Adrenal gland (tissue), 19 donors: ENCODE measurements at regions of chr2 and their contacts with region 1.

Region 1: GRCh38 chr2:230160112-230160660 is 59.6 kb downstream of the SP110 start:
- DNase-seq: peak; percentile 31 to 70 (median 61)
- H3K4me3 ChIP-seq: no peak overlapping the region
- H3K27ac ChIP-seq: no peak overlapping the region
- H3K4me1 ChIP-seq: no peaks in the 10 kb centered on the region
- H3K27me3 ChIP-seq: no peaks in the 10 kb centered on the region
- CTCF ChIP-seq: peak; percentile 66 to 92 (median 86)
- POLR2A ChIP-seq: no peak

Region 2: GRCh38 chr2:230007931-230008707 is 152.1 kb before region 1 on chr2:
- intact Hi-C with region 1: loop called (anchors 5 kb)
- DNase-seq: peak; percentile 82 to 95 (median 87)
- H3K4me3 ChIP-seq: peak overlapping the region in 1 of 4 donors; percentile 42
- H3K27ac ChIP-seq: peak overlapping the region in 4 of 5 donors; percentile 7 to 64 (median 36)
- H3K4me1 ChIP-seq: peaks cover 4 to 9% of the 10 kb centered on the region in 2 donors
- H3K27me3 ChIP-seq: no peaks in the 10 kb centered on the region
- CTCF ChIP-seq: peak; percentile 87 to 93 (median 88)
- POLR2A ChIP-seq: no peak

Region 3: GRCh38 chr2:230068016-230068650 is 92.1 kb before region 1 on chr2:
- intact Hi-C with region 1: loop called (anchors 2 to 5 kb)
- DNase-seq: peak; percentile 58 to 74 (median 67)
- H3K4me3 ChIP-seq: peak overlapping the region; percentile 38 to 85 (median 62)
- H3K27ac ChIP-seq: peak overlapping the region; percentile 44 to 89 (median 69)
- H3K4me1 ChIP-seq: no peaks in the 10 kb centered on the region
- H3K27me3 ChIP-seq: no peaks in the 10 kb centered on the region
- CTCF ChIP-seq: peak in 2 of 6 experiments; percentile 27 to 33
- POLR2A ChIP-seq: no peak

Region 4: DNA sequence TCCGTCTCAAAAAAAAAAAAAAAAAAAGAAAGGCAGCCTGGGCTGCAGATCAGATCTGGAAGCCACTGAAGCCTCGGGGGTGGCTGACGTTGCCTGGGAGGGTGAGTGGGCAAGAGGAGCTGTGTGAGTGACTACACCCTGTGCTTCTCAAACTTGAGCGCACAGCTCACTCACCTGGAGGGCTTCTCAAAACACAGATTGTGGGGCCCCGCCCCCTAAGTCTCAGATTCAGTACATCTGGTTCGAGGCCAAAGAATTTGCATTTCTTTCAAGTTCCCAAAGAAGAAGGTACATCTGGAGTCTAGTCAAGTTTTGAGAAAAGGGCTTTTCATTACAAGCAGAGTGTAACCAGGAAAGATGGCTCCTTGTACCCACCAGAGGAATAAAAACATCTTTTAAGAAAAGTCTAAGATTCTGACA is 454.7 kb after region 1 on chr2:
- intact Hi-C with region 1: loop called in 1 of 2 experiments (anchors 5 kb)
- DNase-seq: no peak
- H3K4me3 ChIP-seq: no peak overlapping the region
- H3K27ac ChIP-seq: no peak overlapping the region
- H3K4me1 ChIP-seq: no peaks in the 10 kb centered on the region
- H3K27me3 ChIP-seq: no peaks in the 10 kb centered on the region
- CTCF ChIP-seq: no peak
- POLR2A ChIP-seq: no peak